Dorsolateral prefrontal cortex (tissue), 120 donors: ENCODE measurements at regions of chr14 and their contacts with region 1.

Region 1: GRCh38 chr14:105203057-105203531 is 22.0 kb upstream of the NUDT14 start:
- DNase-seq: peak; percentile 74 to 86 (median 79)
- H3K4me3 ChIP-seq: peak overlapping the region in 1 of 59 donors; percentile 7
- H3K27ac ChIP-seq: peak overlapping the region in 2 of 59 donors; percentile 31 to 44
- H3K27me3 ChIP-seq: peaks cover 0 to 30% (median 0%) of the 10 kb centered on the region in 45 donors
- CTCF ChIP-seq: peak; percentile 85 to 98 (median 93)

Region 2: DNA sequence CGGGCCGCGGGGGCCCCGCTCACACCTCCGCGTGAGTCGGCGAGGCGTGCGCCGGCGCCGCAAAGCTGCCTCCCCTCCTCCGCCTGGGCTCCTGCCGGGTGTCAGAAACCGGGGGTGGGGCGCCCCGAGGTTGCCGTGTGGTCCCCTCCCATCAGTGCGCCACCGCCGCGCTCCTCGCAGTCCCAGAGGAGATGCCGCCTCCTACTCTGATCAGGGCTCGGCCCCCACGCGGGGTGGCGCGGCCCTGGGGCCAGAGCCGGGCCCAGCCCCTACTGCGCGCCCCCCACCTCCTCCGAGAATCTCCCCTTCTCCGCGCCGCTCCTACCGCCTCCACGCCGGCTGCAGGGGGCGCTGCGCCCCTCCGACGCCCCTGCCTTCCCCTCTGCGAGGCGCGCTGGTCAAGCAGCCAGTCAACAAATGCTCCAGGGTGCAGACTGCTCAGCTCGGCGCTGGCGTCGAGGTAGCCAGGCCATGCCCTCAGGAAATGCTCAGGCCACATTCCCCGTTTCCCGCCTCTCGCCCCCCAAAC is 34.1 kb before region 1 on chr14:
- intact Hi-C with region 1: no loop called
- DNase-seq: peak in 1 of 10 donors; percentile 51
- H3K4me3 ChIP-seq: peak overlapping the region in 56 of 59 donors; percentile 7 to 65 (median 48)
- H3K27ac ChIP-seq: peak overlapping the region in 22 of 59 donors; percentile 5 to 77 (median 50)
- H3K27me3 ChIP-seq: peaks cover 0 to 17% (median 0%) of the 10 kb centered on the region in 45 donors
- CTCF ChIP-seq: peak in 52 of 56 donors; percentile 7 to 60 (median 44)

Region 3: DNA sequence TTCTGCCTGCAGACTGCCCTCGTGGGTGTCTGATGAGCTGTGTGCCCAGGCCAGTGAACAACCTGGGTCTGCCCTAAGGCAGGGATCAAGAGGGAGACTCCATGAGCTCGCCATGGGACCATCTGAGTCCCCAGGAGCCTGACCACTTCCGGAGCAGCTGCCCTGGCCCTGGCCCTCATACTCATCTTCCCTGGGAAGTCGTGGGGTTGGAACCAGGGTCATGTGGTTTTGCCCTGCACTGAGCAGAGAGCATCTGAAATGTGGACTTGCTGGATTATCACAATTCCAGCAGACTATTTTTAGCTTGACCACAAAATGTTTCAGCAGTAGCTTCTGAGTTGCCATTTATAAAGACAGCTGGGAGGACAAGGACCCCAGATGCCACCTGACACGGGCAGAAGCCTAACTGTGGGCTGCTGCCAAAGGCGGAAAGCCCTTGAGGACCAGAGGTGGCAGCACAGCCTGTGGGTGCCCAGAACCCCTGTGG is 52.0 kb after region 1 on chr14:
- intact Hi-C with region 1: loop called in 1 of 2 experiments (anchors 10 kb)
- DNase-seq: no peak
- H3K4me3 ChIP-seq: no peak overlapping the region
- H3K27ac ChIP-seq: peak overlapping the region in 4 of 59 donors; percentile 3 to 14 (median 9)
- H3K27me3 ChIP-seq: no peaks in the 10 kb centered on the region
- CTCF ChIP-seq: no peak

Region 4: DNA sequence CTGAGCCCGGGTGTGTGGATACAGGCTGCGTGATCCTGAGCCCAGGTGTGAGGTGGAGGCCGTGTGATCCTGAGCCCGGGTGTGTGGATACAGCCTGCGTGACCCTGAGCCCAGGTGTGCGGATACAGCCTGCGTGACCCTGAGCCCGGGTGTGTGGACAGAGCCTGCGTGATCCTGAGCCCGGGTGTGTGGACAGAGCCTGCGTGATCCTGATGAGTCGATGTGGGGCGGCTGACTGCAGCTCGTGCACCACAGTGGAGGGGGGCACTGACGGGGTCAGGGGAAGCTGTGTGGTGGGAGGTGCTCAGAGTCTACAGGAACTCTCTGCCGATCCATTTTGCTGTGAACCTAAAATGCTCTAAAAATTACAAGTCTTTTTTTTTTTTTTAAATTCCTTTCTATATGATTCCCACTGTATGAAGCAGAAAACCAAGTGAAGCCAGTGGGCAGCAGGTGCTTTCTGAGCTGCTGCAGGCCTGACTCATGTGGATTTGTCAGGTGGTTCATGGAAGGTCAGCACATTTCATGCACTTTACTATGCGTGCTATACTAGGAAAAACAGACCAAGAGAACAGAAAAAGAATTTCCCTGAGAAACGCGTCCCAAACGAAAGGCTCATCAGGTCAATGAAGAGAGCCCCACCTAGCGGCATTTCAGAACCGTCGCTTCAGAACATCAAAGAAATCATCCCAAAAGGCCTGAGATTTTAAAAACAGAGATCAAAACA is 78.4 kb after region 1 on chr14:
- intact Hi-C with region 1: loop called (anchors 1 to 5 kb)
- DNase-seq: peak in 3 of 10 donors; percentile 26 to 61 (median 51)
- H3K4me3 ChIP-seq: no peak overlapping the region
- H3K27ac ChIP-seq: peak overlapping the region in 15 of 59 donors; percentile 4 to 77 (median 25)
- H3K27me3 ChIP-seq: no peaks in the 10 kb centered on the region
- CTCF ChIP-seq: peak; percentile 55 to 83 (median 73)

Region 5: GRCh38 chr14:105351920-105352851 is 149.1 kb after region 1 on chr14:
- intact Hi-C with region 1: loop called (anchors 2 to 5 kb)
- DNase-seq: peak; percentile 75 to 90 (median 85)
- H3K4me3 ChIP-seq: peak overlapping the region in 1 of 59 donors; percentile 6
- H3K27ac ChIP-seq: peak overlapping the region in 47 of 59 donors; percentile 3 to 80 (median 53)
- H3K27me3 ChIP-seq: no peaks in the 10 kb centered on the region
- CTCF ChIP-seq: peak; percentile 51 to 94 (median 87)